ENCODE measurements at regions of chr1 and their contacts with region 1.

Region 1: DNA sequence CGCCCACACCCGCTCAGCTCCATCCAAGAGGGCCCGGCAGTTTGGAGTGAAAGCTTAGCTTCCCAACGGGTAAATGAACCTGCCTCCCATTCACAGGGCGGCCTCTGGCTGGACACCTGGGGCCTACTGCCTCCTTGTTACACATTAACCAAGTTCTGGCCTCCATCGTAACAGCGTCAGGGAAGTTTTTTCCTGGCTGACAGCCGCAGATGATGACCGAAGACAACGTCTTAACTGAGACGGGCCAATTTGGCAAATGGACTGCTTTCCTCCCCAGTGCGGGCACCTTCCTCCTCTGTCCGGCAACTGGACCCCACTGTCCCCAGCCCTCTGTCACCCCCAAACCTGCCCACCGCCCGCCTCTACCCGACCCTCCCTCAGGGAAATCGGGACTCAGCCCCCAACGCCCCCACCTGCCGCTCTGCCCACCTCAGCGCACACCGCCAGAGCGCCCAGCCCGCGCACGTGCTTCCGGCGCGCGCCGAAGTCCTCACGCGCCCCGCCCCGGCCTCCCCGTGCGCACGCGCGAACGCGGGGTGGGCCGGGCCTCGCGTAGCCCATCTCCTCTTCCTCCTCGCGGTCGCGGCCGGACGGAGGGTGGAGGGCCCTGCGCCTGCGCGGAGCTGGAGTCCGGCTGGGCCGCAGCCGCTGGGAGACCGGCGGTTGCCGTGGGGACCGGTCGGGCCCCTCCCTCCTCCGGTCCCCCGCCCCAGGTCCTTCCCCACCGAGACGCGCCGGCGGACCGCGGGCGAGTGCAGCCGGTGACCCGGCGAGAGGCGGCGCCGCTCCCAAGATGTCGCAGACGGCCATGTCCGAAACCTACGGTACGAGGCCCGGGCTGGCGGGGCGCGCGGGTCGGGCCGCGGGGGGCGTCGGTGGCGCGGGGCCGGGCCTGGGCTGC is at the start of gene RAB4A:
- DNase-seq: peak; percentile 78
- H3K4me3 Mint-ChIP-seq: peak within 1 kb of the TSS; percentile 91
- H3K27ac Mint-ChIP-seq: peak within 1 kb of the TSS; percentile 82
- H3K4me1 Mint-ChIP-seq: peaks cover 19% of the 10 kb centered on the region
- H3K27me3 Mint-ChIP-seq: peaks cover 2% of the 10 kb centered on the region
- total RNA-seq, gene RAB4A: 29.0 and 29.3 TPM in 2 replicates

Region 2: DNA sequence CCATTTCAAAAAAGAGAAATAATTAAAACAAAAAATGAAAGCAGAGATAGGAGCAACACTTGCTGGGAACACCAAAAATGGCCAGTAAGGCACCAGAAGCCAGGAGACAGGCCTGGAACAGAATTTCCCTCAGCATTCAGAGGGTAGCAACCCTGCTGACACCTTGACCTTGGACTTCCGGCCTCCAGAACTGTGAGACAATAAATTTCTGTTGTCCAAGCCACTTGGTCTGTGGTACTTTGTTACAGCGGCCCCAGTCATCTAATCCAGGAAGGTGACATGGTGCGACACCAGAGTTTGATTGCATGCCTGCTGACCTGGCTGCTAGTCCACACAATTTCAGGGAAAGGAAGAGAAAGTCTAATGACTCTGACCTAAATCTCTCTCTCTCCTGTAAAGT is 10.5 kb before region 1 on chr1:
- intact Hi-C with region 1: no loop called
- DNase-seq: no peak
- H3K4me3 Mint-ChIP-seq: no peak overlapping the region
- H3K27ac Mint-ChIP-seq: no peak overlapping the region
- H3K4me1 Mint-ChIP-seq: peaks cover 15% of the 10 kb centered on the region
- H3K27me3 Mint-ChIP-seq: peaks cover 13% of the 10 kb centered on the region

Region 3: GRCh38 chr1:229280921-229281320 is 10.1 kb after region 1 on chr1:
- intact Hi-C with region 1: loop called (anchors 1 kb)
- DNase-seq: no peak
- H3K4me3 Mint-ChIP-seq: no peak overlapping the region
- H3K27ac Mint-ChIP-seq: no peak overlapping the region
- H3K4me1 Mint-ChIP-seq: peaks cover 32% of the 10 kb centered on the region
- H3K27me3 Mint-ChIP-seq: no peaks in the 10 kb centered on the region

Region 4: GRCh38 chr1:229287267-229287666 is 16.5 kb after region 1 on chr1:
- intact Hi-C with region 1: loop called (anchors 1 kb)
- DNase-seq: no peak
- H3K4me3 Mint-ChIP-seq: no peak overlapping the region
- H3K27ac Mint-ChIP-seq: no peak overlapping the region
- H3K4me1 Mint-ChIP-seq: peaks cover 36% of the 10 kb centered on the region
- H3K27me3 Mint-ChIP-seq: no peaks in the 10 kb centered on the region

Region 5: GRCh38 chr1:229479660-229480399 is 209.0 kb after region 1 on chr1:
- intact Hi-C with region 1: loop called (anchors 5 kb)
- DNase-seq: no peak
- H3K4me3 Mint-ChIP-seq: no peak overlapping the region
- H3K27ac Mint-ChIP-seq: no peak overlapping the region
- H3K4me1 Mint-ChIP-seq: peaks cover 17% of the 10 kb centered on the region
- H3K27me3 Mint-ChIP-seq: no peaks in the 10 kb centered on the region

Region 6: DNA sequence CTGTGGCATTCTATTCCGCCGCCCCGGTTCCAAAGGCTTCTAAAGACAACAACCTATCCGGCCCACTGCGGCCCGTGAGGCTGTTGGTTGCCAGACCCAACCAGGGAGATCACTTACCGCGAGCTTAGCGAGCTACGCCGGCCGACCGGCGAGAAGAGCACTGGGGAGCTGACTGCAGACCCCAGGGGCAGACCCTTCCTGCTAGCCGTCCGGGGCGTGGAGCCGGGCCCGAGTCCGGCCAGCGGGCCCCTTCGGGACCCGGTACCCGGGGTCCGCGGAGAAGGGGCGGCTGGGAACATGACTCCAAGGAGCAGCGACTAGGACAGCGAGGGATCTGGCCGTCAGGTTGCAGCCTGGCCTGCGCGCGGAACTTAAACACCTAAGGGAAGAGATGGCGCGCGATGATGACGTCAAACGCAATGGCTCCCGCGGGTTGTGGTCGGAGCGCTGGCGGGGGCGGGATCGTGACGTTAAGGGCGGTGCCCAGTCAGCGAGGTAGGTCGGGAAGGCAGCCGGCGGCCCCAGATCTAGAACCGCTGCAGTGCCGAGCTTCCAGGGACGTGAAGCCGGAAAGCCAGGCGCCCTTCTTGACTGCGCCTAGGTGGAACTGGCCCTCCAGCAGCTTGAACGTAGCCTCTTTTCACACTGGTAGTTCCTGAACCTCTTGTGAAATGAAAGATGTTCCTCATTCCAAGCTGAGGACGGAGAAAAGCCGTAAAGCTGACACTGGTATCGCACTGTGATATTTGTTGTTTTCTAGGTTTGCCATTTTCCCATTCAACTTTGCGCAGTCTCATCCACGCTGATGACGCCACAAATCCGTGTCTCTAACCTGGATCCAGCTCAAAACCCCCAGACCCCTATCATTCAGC is 237.4 kb after region 1 on chr1 and contains the start of gene NUP133:
- intact Hi-C with region 1: loop called (anchors 1 kb)
- DNase-seq: peak; percentile 97
- H3K4me3 Mint-ChIP-seq: peak within 1 kb of the TSS; percentile 96
- H3K27ac Mint-ChIP-seq: peak within 1 kb of the TSS; percentile 97
- H3K4me1 Mint-ChIP-seq: peaks cover 25% of the 10 kb centered on the region
- H3K27me3 Mint-ChIP-seq: peaks cover 4% of the 10 kb centered on the region
- total RNA-seq, gene NUP133: 47.9 and 49.1 TPM in 2 replicates

Region 7: DNA sequence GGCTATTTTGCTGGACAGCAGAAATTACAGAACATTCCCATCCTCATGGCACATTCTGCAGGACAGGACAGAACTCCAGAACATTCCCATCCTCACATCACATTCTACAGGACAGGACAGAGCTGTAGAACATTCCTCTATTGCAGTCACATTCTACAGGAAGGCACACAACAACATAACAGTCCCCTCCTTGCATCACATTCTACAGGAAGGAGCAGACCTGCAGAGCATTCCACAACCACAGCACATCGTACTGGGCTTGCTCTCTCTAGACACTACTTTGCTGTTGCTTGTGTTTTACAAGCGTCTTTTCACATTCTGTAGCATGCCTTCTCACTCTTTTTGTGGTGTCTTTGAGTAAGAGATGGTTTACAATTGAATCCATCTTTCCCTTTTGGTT is 314.5 kb after region 1 on chr1:
- intact Hi-C with region 1: no loop called
- DNase-seq: no peak
- H3K4me3 Mint-ChIP-seq: no peak overlapping the region
- H3K27ac Mint-ChIP-seq: no peak overlapping the region
- H3K4me1 Mint-ChIP-seq: no peaks in the 10 kb centered on the region
- H3K27me3 Mint-ChIP-seq: peaks cover 7% of the 10 kb centered on the region

Region 8: GRCh38 chr1:230531103-230531502 is 1260.3 kb after region 1 on chr1:
- intact Hi-C with region 1: no loop called
- DNase-seq: no peak
- H3K4me3 Mint-ChIP-seq: no peak overlapping the region
- H3K27ac Mint-ChIP-seq: no peak overlapping the region
- H3K4me1 Mint-ChIP-seq: no peaks in the 10 kb centered on the region
- H3K27me3 Mint-ChIP-seq: peaks cover 4% of the 10 kb centered on the region

Measured in activated T-helper 1 cell treated with anti-CD3 and anti-CD28 coated beads, Interleukin-12 subunit alpha, Interleukin-12 subunit beta, Interleukin-2, Interleukin-4 antibody, amounts not matched to agents 30 ng/mL and 10 ng/mL and 1 ng/mL, durations not matched to agents 14 hours and 24 hours and 36 hours (primary cell).